HepG2 (cell line): ENCODE measurements at regions of chr6 and their contacts with region 1.

Region 1: DNA sequence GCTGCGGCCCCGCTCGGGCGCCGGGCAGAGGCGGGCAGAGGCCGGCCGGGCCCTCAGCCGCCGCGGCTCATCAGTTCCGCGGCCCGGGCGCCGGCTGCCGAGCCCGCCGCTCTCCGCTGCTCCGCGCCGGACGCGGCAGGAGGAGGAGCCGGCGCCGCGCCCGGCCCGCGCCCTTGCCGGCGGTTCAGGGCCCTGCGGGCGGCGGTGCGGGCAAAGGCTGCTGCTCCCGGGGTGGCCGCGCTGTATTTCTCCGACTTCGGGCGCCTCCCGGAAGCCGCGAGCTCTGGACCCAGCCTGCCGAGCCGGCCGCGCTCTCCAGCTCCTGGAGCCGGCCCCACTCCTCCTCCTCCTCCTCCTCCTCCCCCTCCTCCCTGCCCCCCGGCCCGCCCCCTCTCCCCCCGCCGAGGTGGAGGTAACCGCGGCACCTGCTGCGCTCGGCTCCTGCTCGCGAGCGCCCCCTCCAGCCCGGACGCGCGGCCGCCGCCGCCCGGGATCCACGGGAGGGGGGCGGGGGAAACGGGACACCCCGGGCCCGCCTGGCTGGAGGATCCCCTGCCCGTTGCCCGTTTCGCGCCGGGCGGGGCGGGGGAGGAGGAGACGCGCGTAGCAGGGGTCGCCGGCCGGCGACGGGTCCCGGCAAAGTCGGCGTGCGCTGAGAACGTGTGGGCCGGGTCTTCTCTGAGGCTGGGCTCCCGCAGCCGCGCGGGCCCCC is at the start of gene SLC22A23:
- DNase-seq: peak; percentile 56
- ATAC-seq: peak; percentile 72
- H3K4me3 ChIP-seq: peak within 1 kb of the TSS; percentile 77 to 91 (median 85)
- H3K27ac ChIP-seq: peak within 1 kb of the TSS; percentile 52
- H3K4me1 ChIP-seq: peaks cover 49% of the 10 kb centered on the region
- H3K27me3 ChIP-seq: no peaks in the 10 kb centered on the region; a peak in 1 of 5 replicates
- CTCF ChIP-seq: peak; percentile 78
- EP300 ChIP-seq: no peak
- POLR2A ChIP-seq: peak; percentile 20 to 63; a peak in 3 of 4 replicates
- RAD21 ChIP-seq: peak; percentile 80
- total RNA-seq, gene SLC22A23: 14.4 and 17.5 TPM in 2 replicates

Region 2: DNA sequence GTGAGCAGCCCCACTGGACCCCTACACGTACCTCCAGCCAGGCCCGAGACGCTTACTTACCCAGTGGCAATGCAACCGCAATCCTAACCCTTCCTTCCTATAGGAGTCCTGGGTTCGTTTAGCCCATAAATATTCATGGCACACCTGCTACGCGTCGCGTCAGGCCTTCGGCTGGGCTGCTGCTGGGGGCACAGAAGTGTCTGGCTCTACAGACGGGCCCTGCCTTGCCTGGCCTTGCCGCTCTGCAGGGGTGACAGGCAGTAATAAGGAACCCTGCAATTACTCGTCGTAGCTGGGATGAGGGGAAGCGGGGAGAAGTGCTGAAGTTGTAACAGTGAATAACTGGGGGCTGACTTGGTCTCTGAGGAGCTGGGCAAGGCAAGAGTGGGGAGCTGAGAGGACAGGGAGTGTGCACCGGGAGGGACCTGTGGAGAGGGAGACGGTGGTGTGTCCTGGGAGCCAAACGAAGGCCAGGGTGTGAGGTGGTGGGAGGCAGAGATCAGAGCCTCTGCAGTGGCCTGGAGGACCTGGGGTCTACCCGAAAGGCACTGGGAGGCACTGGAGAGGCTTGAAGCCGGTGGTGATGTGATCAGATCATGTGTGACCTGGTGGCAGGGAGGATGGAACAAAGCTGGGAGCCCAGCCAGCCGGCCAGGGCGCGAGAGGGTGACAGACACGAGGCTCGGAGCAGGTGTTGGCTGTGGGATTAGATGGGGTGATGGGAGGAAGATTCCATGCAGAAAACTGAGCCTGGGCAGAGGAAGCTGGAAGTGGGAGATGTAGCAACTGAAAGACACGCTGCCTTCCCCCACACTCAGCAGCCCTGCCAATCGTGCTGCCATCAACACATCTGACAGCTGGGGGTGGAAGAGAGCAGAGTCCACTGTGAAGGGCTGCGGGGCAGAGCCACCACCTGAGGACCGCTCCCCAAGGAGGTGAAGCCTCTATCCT is 161.7 kb before region 1 on chr6:
- CTCF ChIA-PET with region 1: no interaction called
- POLR2A ChIA-PET with region 1: no interaction called
- in situ Hi-C with region 1: no loop called
- intact Hi-C with region 1: loop called (anchors 5 kb)
- DNase-seq: peak; percentile 25
- ATAC-seq: peak; percentile 72
- H3K4me3 ChIP-seq: no peak overlapping the region
- H3K27ac ChIP-seq: no peak overlapping the region
- H3K4me1 ChIP-seq: peaks cover 11% of the 10 kb centered on the region
- H3K27me3 ChIP-seq: no peaks in the 10 kb centered on the region
- CTCF ChIP-seq: peak; percentile 70
- EP300 ChIP-seq: no peak
- POLR2A ChIP-seq: no peak
- RAD21 ChIP-seq: peak; percentile 53; the same call in 1 of the 2 replicates

Region 3: DNA sequence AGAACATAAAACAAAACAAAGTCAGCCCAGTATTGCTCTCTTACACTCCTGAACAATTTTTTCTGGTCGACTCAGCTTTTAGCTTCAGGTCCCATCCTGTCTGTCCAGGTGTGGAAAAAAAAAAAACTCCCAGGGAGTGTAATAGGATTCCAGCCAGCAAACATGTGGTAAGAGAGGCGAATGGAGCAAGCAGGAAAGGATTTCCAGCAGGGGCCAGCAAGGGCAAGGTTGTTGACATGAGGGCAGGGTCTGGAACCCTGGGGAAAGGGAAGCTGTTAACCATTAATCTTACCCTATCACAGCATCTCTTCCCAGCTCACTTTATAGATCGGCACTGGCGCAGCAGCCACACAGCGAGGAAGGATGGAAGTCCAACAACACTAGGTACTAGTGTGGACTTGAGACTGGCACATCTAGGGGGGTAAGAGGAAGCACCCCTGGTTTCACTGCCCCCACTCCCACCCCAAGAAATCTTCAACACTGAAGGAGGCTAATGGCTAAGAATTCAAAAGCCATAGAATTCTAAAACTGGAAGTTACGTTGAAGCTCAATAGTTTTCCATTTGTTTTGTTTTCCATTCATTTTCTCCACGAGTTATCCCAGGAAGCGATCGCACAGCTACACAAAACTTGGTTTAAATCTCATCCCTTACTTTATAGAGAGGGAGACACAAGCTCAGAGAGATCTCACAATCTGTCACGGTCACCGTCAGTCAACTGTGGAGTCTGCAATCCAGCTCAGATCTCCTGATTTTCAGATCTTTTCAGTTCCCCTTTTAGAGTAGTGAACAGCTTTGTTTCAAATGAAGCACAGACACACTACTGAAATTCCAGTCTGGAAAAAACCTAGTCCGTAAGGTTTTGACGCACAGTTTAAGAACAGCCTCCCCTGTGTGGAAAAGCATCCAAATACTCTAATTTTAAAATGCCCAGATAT is 53.4 kb before region 1 on chr6:
- CTCF ChIA-PET with region 1: no interaction called
- POLR2A ChIA-PET with region 1: interaction called, 33 read pairs
- in situ Hi-C with region 1: no loop called
- intact Hi-C with region 1: no loop called
- DNase-seq: peak; percentile 99
- ATAC-seq: peak; percentile 98
- H3K4me3 ChIP-seq: peak overlapping the region in 1 of 3 experiments; percentile 18; a peak in 2 of 6 replicates
- H3K27ac ChIP-seq: peak overlapping the region; percentile 84
- H3K4me1 ChIP-seq: peaks cover 100% of the 10 kb centered on the region
- H3K27me3 ChIP-seq: no peaks in the 10 kb centered on the region
- CTCF ChIP-seq: peak; percentile 60
- EP300 ChIP-seq: peak; percentile 93 to 99
- POLR2A ChIP-seq: peak; percentile 92 to 95
- RAD21 ChIP-seq: peak; percentile 68

Region 4: DNA sequence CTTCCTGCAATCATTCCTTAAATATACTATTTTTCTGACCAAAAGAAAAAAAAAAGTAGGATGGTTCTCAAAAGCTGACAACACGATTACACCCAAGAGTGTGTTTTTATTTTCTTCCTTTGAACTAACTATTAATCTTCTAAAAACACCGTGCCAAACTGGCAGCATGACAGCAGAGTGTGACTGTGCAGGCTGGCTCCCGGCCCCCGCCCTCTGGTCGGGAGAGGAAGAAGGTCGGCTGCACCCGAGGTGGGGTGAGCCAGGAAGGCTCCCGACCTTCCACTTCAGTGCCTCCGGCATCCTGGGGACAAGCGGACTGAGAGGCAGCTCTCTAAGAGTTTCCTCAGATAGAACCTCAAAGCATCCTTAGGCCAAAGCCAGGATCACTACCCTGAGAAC is 29.2 kb before region 1 on chr6:
- CTCF ChIA-PET with region 1: no interaction called
- POLR2A ChIA-PET with region 1: no interaction called
- in situ Hi-C with region 1: no loop called
- intact Hi-C with region 1: no loop called
- DNase-seq: no peak
- ATAC-seq: no peak
- H3K4me3 ChIP-seq: no peak overlapping the region
- H3K27ac ChIP-seq: no peak overlapping the region
- H3K4me1 ChIP-seq: peaks cover 11% of the 10 kb centered on the region; the same call in 1 of the 2 replicates
- H3K27me3 ChIP-seq: no peaks in the 10 kb centered on the region
- CTCF ChIP-seq: no peak
- EP300 ChIP-seq: no peak
- POLR2A ChIP-seq: no peak
- RAD21 ChIP-seq: no peak

Region 5: GRCh38 chr6:3438190-3439167 is 18.4 kb before region 1 on chr6:
- CTCF ChIA-PET with region 1: no interaction called
- POLR2A ChIA-PET with region 1: interaction called, 32 read pairs
- in situ Hi-C with region 1: no loop called
- intact Hi-C with region 1: loop called (anchors 2 kb)
- DNase-seq: peak; percentile 68
- ATAC-seq: peak; percentile 85
- H3K4me3 ChIP-seq: peak overlapping the region in 1 of 3 experiments; percentile 5; a peak in 1 of 6 replicates
- H3K27ac ChIP-seq: peak overlapping the region; percentile 28
- H3K4me1 ChIP-seq: peaks cover 44% of the 10 kb centered on the region
- H3K27me3 ChIP-seq: no peaks in the 10 kb centered on the region
- CTCF ChIP-seq: no peak
- EP300 ChIP-seq: no peak
- POLR2A ChIP-seq: no peak
- RAD21 ChIP-seq: no peak

Region 6: GRCh38 chr6:3732345-3733141 is 275.6 kb after region 1 on chr6:
- CTCF ChIA-PET with region 1: no interaction called
- POLR2A ChIA-PET with region 1: no interaction called
- in situ Hi-C with region 1: loop called (anchors 10 kb)
- intact Hi-C with region 1: loop called (anchors 5 kb)
- DNase-seq: peak; percentile 64
- ATAC-seq: peak; percentile 93
- H3K4me3 ChIP-seq: no peak overlapping the region
- H3K27ac ChIP-seq: no peak overlapping the region
- H3K4me1 ChIP-seq: no peaks in the 10 kb centered on the region
- H3K27me3 ChIP-seq: no peaks in the 10 kb centered on the region
- CTCF ChIP-seq: peak; percentile 99
- EP300 ChIP-seq: no peak
- POLR2A ChIP-seq: no peak
- RAD21 ChIP-seq: peak; percentile 96